ENCODE measurements at regions of chr7 and their contacts with region 1.

Region 1: GRCh38 chr7:80060218-80060806 is 74.3 kb upstream of the GNAI1 start:
- DNase-seq: no peak
- H3K4me3 ChIP-seq: no peak overlapping the region
- CTCF ChIP-seq: peak; percentile 14

Region 2: DNA sequence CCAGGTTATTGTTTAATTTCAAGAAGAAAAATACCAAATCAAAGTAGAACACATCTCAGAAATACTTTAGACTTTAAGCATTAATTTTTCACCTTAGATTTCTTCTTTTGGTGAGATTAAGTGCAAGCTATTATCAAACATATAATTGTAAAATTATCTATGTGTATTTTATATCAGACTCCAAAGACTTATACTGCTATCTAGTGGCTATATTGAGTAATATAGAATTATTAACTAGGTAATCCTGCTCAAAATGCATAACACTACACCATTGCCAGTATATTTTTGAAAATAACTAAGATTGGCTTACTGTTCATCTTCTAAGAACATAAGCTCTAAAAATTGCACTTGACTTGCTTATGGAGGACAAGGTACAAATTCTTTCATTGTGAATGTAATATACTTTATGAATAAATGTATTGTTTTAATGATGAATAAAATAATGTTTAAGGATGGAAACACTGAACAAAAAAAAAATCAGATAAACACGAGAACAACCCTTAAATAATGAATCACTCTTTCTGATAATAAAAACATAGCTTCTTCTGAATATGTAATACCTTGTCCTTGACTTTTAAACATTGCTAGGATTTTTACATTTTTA is 12.4 kb before region 1 on chr7:
- CTCF ChIA-PET with region 1: interaction called, 25 read pairs
- POLR2A ChIA-PET with region 1: no interaction called
- DNase-seq: no peak
- H3K4me3 ChIP-seq: no peak overlapping the region
- CTCF ChIP-seq: no peak

Region 3: DNA sequence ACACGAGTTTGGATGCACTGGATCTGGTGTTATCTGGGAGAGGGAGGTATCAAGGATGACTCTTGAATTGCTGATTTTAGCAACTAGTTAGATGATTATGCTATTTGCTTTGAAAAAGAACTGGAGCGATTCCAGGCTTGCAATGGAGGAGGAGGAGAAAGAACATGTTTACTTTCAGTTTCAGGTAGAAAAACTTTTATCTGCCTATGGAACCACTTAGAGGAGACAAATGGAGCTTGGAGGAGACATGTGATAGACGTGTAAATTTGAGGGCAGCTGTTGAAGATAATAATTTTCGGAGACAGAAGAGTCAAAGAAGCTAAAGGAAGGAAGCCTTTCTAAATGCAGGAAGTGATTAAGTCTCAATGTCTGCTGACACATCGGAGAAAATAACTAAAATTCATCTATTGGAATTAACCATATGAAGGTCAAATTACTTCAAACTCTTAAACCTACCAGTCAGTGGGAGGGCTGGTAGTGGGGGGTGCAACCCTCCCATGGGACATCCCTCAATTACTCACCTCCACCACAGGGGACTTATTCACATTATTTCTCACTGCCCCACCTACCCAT is 17.9 kb after region 1 on chr7:
- CTCF ChIA-PET with region 1: interaction called, 11 read pairs
- POLR2A ChIA-PET with region 1: no interaction called
- DNase-seq: no peak
- H3K4me3 ChIP-seq: peak overlapping the region; percentile 7
- CTCF ChIP-seq: no peak

Region 4: GRCh38 chr7:80392229-80393169 is 332.2 kb after region 1 on chr7:
- CTCF ChIA-PET with region 1: interaction called, 52 read pairs
- POLR2A ChIA-PET with region 1: no interaction called
- DNase-seq: no peak
- H3K4me3 ChIP-seq: no peak overlapping the region
- CTCF ChIP-seq: peak; percentile 25

Region 5: GRCh38 chr7:80450621-80451308 is 390.5 kb after region 1 on chr7:
- CTCF ChIA-PET with region 1: interaction called, 20 read pairs
- POLR2A ChIA-PET with region 1: no interaction called
- DNase-seq: no peak
- H3K4me3 ChIP-seq: no peak overlapping the region
- CTCF ChIP-seq: no peak